ENCODE measurements at regions of chr20 and their contacts with region 1.

Region 1: GRCh38 chr20:33810885-33811777 is at the start of gene CHMP4B:
- DNase-seq: peak; percentile 99
- ATAC-seq: peak; percentile 93
- H3K4me3 Mint-ChIP-seq: peak within 1 kb of the TSS; percentile 83
- H3K27ac Mint-ChIP-seq: peak within 1 kb of the TSS; percentile 89
- H3K4me1 Mint-ChIP-seq: peaks cover 36% of the 10 kb centered on the region
- H3K27me3 Mint-ChIP-seq: no peaks in the 10 kb centered on the region
- total RNA-seq, gene CHMP4B: 86.0 to 94.1 TPM

Region 2: DNA sequence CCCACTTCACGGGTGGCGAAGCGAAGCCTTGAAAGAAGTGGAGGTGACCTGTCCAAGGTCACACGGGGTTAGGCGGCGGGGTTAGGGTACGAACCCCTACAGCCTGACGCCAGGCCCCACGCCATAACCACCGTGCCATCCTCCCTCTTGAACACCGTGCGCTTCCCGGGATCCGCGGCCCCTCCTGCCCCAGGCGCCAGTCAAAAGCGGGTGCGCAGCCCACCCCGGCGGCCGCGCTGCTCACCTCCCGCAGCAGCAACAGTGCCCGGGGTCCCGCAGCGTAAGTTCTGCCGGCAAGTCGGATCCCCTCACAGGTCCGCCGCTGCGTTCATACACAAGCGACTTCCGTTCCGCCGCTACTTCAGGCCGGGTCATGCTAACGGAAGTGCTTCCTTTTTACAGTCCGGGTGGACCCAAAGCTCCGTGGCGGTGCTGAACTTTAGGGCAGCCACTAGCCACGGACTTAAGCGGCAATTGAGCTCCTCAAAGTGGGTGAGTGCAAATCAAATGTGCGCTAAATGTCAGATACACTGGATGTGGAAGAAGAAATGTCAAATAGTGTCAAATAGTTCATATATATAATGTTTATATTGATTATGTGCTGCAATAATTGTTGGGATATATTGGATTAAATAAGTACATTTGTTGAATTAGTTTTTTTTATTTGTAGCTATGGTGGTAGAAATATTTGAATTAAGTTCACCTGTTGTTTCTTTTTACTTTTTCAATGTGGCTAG is 409.8 kb before region 1 on chr20 and contains the start of gene CDK5RAP1:
- CTCF ChIA-PET with region 1: no interaction called
- POLR2A ChIA-PET with region 1: no interaction called
- intact Hi-C with region 1: loop called in 1 of 2 experiments (anchors 1 kb)
- DNase-seq: peak; percentile 92
- ATAC-seq: peak; percentile 98
- H3K4me3 Mint-ChIP-seq: peak within 1 kb of the TSS; percentile 79
- H3K27ac Mint-ChIP-seq: peak within 1 kb of the TSS; percentile 90
- H3K4me1 Mint-ChIP-seq: peaks cover 42% of the 10 kb centered on the region
- H3K27me3 Mint-ChIP-seq: no peaks in the 10 kb centered on the region
- total RNA-seq, gene CDK5RAP1: 31.3 to 41.5 TPM

Region 3: GRCh38 chr20:33554914-33555420 is 256.2 kb before region 1 on chr20:
- CTCF ChIA-PET with region 1: no interaction called
- POLR2A ChIA-PET with region 1: no interaction called
- intact Hi-C with region 1: loop called in 1 of 2 experiments (anchors 1 kb)
- DNase-seq: peak; percentile 44
- ATAC-seq: peak; percentile 99
- H3K4me3 Mint-ChIP-seq: no peak overlapping the region
- H3K27ac Mint-ChIP-seq: peak overlapping the region; percentile 77
- H3K4me1 Mint-ChIP-seq: peaks cover 30% of the 10 kb centered on the region
- H3K27me3 Mint-ChIP-seq: no peaks in the 10 kb centered on the region

Region 4: DNA sequence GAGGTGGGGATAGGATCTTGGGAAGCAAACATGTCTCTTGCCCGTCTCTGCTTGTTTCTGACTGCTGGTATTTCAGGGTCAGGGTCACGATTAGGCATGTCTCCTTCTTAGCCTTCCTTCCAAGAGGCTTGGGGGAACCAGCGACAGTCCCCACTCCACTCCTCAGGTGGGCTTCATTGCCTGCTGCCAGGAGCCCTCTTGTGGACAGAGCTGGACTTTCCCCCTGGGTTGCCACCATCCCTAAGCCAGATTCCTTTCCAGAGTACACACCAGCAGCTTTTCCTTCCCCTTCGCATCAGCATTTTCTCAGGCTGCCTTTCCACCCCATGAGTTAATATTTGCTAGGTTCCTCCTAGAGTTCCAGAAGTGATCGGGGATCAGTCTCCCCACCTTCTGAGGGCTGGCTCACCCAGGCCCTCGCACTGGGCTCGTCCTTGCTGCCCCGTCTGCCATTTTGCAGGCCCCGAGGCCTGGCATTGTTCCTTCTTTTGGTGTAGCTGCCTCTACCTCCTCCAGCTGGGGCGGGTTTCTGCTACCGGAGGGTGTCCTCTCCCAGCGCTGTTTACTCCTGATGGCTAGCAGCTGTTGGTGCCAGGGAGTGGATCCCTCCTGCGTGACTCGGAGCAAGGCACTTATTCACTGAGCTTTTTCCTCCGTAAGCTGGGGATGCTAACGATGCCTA is 157.8 kb before region 1 on chr20:
- CTCF ChIA-PET with region 1: no interaction called
- POLR2A ChIA-PET with region 1: no interaction called
- intact Hi-C with region 1: no loop called
- DNase-seq: peak; percentile 61
- ATAC-seq: peak; percentile 34
- H3K4me3 Mint-ChIP-seq: no peak overlapping the region
- H3K27ac Mint-ChIP-seq: peak overlapping the region; percentile 78
- H3K4me1 Mint-ChIP-seq: peaks cover 41% of the 10 kb centered on the region
- H3K27me3 Mint-ChIP-seq: no peaks in the 10 kb centered on the region

Region 5: DNA sequence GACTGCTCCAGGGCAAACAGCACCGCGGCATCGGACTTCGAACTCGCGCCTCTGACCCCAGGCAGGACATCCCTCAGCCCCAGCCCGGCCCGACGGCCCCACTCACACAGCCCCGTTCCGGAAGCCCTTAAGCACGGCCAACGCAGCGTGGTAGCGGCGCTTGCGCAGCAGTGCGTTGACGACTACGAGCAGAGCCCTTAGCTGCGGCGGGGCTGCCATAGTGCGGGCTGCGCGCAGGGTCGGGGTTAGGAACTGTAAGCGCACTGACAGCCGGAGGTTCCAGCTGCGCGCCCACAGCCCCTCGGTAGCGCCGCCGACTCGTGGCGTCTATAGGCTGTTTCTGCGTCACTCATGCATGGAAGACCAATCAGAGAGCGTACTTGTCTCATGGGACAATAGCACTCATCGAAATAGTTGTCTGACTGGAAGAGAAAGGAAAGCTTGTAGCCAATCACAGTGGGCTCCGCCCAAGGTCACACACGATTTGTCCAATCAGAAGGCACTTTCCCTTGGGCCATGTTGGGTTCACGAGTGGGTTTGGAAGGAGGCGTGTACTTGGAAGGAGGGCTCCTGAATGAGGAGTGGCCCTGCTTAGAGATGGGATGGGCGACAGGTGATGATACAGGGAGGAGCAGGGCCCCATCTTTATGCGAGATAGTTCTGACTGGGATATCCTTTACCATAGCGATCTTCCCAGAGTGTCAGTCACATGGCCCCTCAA is 91.0 kb before region 1 on chr20 and contains the start of gene PXMP4:
- CTCF ChIA-PET with region 1: interaction called, 3 read pairs
- POLR2A ChIA-PET with region 1: no interaction called
- intact Hi-C with region 1: loop called (anchors 1 kb)
- DNase-seq: peak; percentile 92
- ATAC-seq: peak; percentile 99
- H3K4me3 Mint-ChIP-seq: peak within 1 kb of the TSS; percentile 88
- H3K27ac Mint-ChIP-seq: peak within 1 kb of the TSS; percentile 83
- H3K4me1 Mint-ChIP-seq: peaks cover 18% of the 10 kb centered on the region
- H3K27me3 Mint-ChIP-seq: no peaks in the 10 kb centered on the region
- total RNA-seq, gene PXMP4: 8.8 to 10.2 TPM

Region 6: GRCh38 chr20:34111702-34112599 is 300.8 kb after region 1 on chr20 and contains the start of gene EIF2S2:
- CTCF ChIA-PET with region 1: interaction called, 5 read pairs
- POLR2A ChIA-PET with region 1: interaction called, 3 read pairs
- intact Hi-C with region 1: loop called (anchors 1 kb)
- DNase-seq: peak; percentile 97
- ATAC-seq: peak; percentile 88
- H3K4me3 Mint-ChIP-seq: peak within 1 kb of the TSS; percentile 86
- H3K27ac Mint-ChIP-seq: peak within 1 kb of the TSS; percentile 97
- H3K4me1 Mint-ChIP-seq: peaks cover 38% of the 10 kb centered on the region
- H3K27me3 Mint-ChIP-seq: no peaks in the 10 kb centered on the region
- total RNA-seq, gene EIF2S2: 179 to 187 TPM

Region 7: DNA sequence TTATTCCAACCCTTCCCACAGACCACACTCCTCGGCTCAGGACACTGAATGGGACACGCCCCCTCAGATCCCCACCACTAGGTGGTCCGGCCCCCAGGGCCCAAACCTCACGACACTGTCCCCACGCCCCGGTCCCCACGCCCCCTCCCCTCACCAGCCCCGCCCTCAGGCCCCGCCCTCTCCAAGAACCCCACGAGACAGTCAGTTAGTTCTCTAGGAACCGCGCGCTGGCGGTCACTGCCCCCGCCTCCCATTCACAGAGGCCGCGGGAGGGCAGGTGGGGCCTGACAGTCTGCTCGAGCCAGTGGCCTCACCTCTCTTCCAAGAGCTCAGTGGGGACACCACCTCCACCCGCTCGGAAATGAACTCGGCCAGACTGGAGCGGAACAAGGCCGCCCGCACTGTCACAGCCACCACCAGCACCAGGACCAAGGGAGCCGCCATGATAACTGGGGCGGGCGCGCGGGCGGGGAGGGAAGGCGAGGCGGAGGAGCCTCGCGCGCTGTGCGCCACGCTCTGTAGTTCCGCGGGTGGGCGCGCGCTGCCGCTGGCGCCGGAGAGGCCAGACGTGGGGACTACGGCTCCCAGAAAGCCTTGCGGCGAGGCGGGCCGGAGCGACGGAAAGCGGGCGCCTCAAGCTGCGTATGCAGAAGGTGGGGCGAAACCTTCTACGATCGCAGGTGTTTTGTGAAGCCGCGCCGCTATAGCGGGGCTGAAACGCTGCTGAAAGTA is 865.7 kb after region 1 on chr20 and contains the start of gene PIGU:
- CTCF ChIA-PET with region 1: no interaction called
- POLR2A ChIA-PET with region 1: no interaction called
- intact Hi-C with region 1: loop called in 1 of 2 experiments (anchors 1 kb)
- DNase-seq: peak; percentile 98
- ATAC-seq: peak; percentile 97
- H3K4me3 Mint-ChIP-seq: peak within 1 kb of the TSS; percentile 97
- H3K27ac Mint-ChIP-seq: peak within 1 kb of the TSS; percentile 96
- H3K4me1 Mint-ChIP-seq: peaks cover 34% of the 10 kb centered on the region
- H3K27me3 Mint-ChIP-seq: no peaks in the 10 kb centered on the region
- total RNA-seq, gene PIGU: 21.1 to 28.2 TPM

Measured in activated CD4-positive, alpha-beta T cell treated with anti-CD3 and anti-CD28 coated beads for 36 hours (primary cell).